Panc1 (cell line): ENCODE measurements at regions of chr12 and their contacts with region 1.

Region 1: GRCh38 chr12:118016424-118017264 is at the start of gene RFC5:
- DNase-seq: peak; percentile 74
- ATAC-seq: peak; percentile 100
- H3K4me3 ChIP-seq: peak within 1 kb of the TSS; percentile 82 to 87
- H3K27ac ChIP-seq: peak within 1 kb of the TSS; percentile 86
- H3K4me1 ChIP-seq: peaks cover 10% of the 10 kb centered on the region
- H3K27me3 ChIP-seq: no peaks in the 10 kb centered on the region
- CTCF ChIP-seq: no peak
- total RNA-seq, gene RFC5: 25.0 TPM

Region 2: GRCh38 chr12:117874842-117875434 is 141.7 kb before region 1 on chr12:
- CTCF ChIA-PET with region 1: no interaction called
- POLR2A ChIA-PET with region 1: no interaction called
- in situ Hi-C with region 1: no loop called
- intact Hi-C with region 1: loop called (anchors 5 kb)
- DNase-seq: no peak
- ATAC-seq: peak; percentile 88
- H3K4me3 ChIP-seq: no peak overlapping the region
- H3K27ac ChIP-seq: no peak overlapping the region
- H3K4me1 ChIP-seq: 0 out of 2 replicates have a peak, but pooled peaks cover 2% of the 10 kb centered on the region
- H3K27me3 ChIP-seq: no peaks in the 10 kb centered on the region
- CTCF ChIP-seq: peak; percentile 95

Region 3: GRCh38 chr12:118189741-118190191 is 173.1 kb after region 1 on chr12:
- CTCF ChIA-PET with region 1: no interaction called
- POLR2A ChIA-PET with region 1: no interaction called
- in situ Hi-C with region 1: no loop called
- intact Hi-C with region 1: no loop called
- DNase-seq: no peak
- ATAC-seq: no peak
- H3K4me3 ChIP-seq: peak overlapping the region in 1 of 2 experiments; percentile 1; a peak in 1 of 4 replicates
- H3K27ac ChIP-seq: no peak overlapping the region
- H3K4me1 ChIP-seq: no peaks in the 10 kb centered on the region
- H3K27me3 ChIP-seq: no peaks in the 10 kb centered on the region
- CTCF ChIP-seq: no peak